Activated CD4-positive, alpha-beta T cell treated with anti-CD3 and anti-CD28 coated beads, Interleukin-2, amount 10 ng/mL, durations not matched to agents 7 days and 5 days (primary cell): ENCODE measurements at regions of chr9 and their contacts with region 1.

Region 1: GRCh38 chr9:127734747-127735529 is at the start of gene TOR2A:
- DNase-seq: peak; percentile 99
- H3K4me3 Mint-ChIP-seq: peak within 1 kb of the TSS; percentile 82
- H3K27ac Mint-ChIP-seq: peak within 1 kb of the TSS; percentile 94
- H3K4me1 Mint-ChIP-seq: peaks cover 27% of the 10 kb centered on the region
- H3K27me3 Mint-ChIP-seq: no peaks in the 10 kb centered on the region
- total RNA-seq, gene TOR2A: 21.7 to 24.0 TPM

Region 2: GRCh38 chr9:127586537-127586936 is 148.4 kb before region 1 on chr9:
- CTCF ChIA-PET with region 1: interaction called, 19 read pairs
- POLR2A ChIA-PET with region 1: no interaction called
- DNase-seq: peak; percentile 71
- H3K4me3 Mint-ChIP-seq: no peak overlapping the region
- H3K27ac Mint-ChIP-seq: no peak overlapping the region
- H3K4me1 Mint-ChIP-seq: peaks cover 20% of the 10 kb centered on the region
- H3K27me3 Mint-ChIP-seq: peaks cover 20% of the 10 kb centered on the region

Region 3: DNA sequence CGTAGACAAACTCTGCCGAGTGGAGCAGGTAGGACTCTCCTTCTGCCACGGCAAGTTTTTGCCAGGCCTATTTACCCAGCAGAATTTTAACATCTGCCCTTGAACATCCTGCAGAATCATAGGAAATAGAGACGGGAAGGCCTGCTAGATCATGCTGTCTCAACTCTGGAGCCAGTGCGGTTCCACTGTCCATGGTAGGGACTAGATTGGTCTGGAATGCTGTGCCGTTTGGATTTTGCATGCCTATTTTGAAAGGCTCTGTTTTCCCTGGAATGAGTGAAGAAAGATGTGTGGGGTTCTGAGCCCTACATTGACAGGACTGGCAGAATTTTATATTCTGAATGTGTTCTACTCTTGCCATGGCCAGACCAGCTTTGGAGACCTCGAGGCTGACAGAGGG is 61.7 kb before region 1 on chr9:
- CTCF ChIA-PET with region 1: no interaction called
- POLR2A ChIA-PET with region 1: no interaction called
- DNase-seq: no peak
- H3K4me3 Mint-ChIP-seq: no peak overlapping the region
- H3K27ac Mint-ChIP-seq: no peak overlapping the region
- H3K4me1 Mint-ChIP-seq: no peaks in the 10 kb centered on the region
- H3K27me3 Mint-ChIP-seq: peaks cover under 1% of the 10 kb centered on the region

Region 4: GRCh38 chr9:127715394-127716337 is 19.3 kb before region 1 on chr9 and contains the starts of genes PTRH1 and TTC16:
- CTCF ChIA-PET with region 1: interaction called, 31 read pairs
- POLR2A ChIA-PET with region 1: no interaction called
- DNase-seq: peak; percentile 98
- H3K4me3 Mint-ChIP-seq: peak within 1 kb of the TSS; percentile 90
- H3K27ac Mint-ChIP-seq: peak within 1 kb of the TSS; percentile 88
- H3K4me1 Mint-ChIP-seq: peaks cover 36% of the 10 kb centered on the region
- H3K27me3 Mint-ChIP-seq: no peaks in the 10 kb centered on the region
- total RNA-seq, gene PTRH1: 8.7 to 11.0 TPM
- total RNA-seq, gene TTC16: 1.2 to 1.6 TPM

Region 5: GRCh38 chr9:127770905-127771569 is 36.1 kb after region 1 on chr9:
- CTCF ChIA-PET with region 1: interaction called, 25 read pairs
- POLR2A ChIA-PET with region 1: no interaction called
- DNase-seq: peak; percentile 96
- H3K4me3 Mint-ChIP-seq: peak overlapping the region; percentile 81
- H3K27ac Mint-ChIP-seq: peak overlapping the region; percentile 84
- H3K4me1 Mint-ChIP-seq: peaks cover 82% of the 10 kb centered on the region
- H3K27me3 Mint-ChIP-seq: no peaks in the 10 kb centered on the region

Region 6: GRCh38 chr9:127828262-127829031 is 93.5 kb after region 1 on chr9:
- CTCF ChIA-PET with region 1: no interaction called
- POLR2A ChIA-PET with region 1: no interaction called
- DNase-seq: no peak
- H3K4me3 Mint-ChIP-seq: no peak overlapping the region
- H3K27ac Mint-ChIP-seq: no peak overlapping the region
- H3K4me1 Mint-ChIP-seq: peaks cover 8% of the 10 kb centered on the region
- H3K27me3 Mint-ChIP-seq: no peaks in the 10 kb centered on the region

Region 7: GRCh38 chr9:127854184-127854806 is 119.4 kb after region 1 on chr9 and contains the start of gene ENG:
- CTCF ChIA-PET with region 1: interaction called, 11 read pairs
- POLR2A ChIA-PET with region 1: no interaction called
- DNase-seq: peak; percentile 22
- H3K4me3 Mint-ChIP-seq: peak within 1 kb of the TSS; percentile 86
- H3K27ac Mint-ChIP-seq: peak within 1 kb of the TSS; percentile 93
- H3K4me1 Mint-ChIP-seq: peaks cover 42% of the 10 kb centered on the region
- H3K27me3 Mint-ChIP-seq: peaks cover 2% of the 10 kb centered on the region
- total RNA-seq, gene ENG: 17.2 to 17.3 TPM

Region 8: GRCh38 chr9:127916665-127917613 is 182.0 kb after region 1 on chr9 and contains the start of gene ST6GALNAC4:
- CTCF ChIA-PET with region 1: interaction called, 17 read pairs
- POLR2A ChIA-PET with region 1: no interaction called
- DNase-seq: peak; percentile 94
- H3K4me3 Mint-ChIP-seq: peak within 1 kb of the TSS; percentile 78
- H3K27ac Mint-ChIP-seq: peak within 1 kb of the TSS; percentile 87
- H3K4me1 Mint-ChIP-seq: peaks cover 62% of the 10 kb centered on the region
- H3K27me3 Mint-ChIP-seq: peaks cover under 1% of the 10 kb centered on the region
- total RNA-seq, gene ST6GALNAC4: 16.8 to 22.4 TPM